ENCODE measurements at regions of chr12 and their contacts with region 1.

Region 1: GRCh38 chr12:56751712-56752598 is at the start of gene PRIM1:
- DNase-seq: peak; percentile 95
- ATAC-seq: peak; percentile 91
- H3K4me3 Mint-ChIP-seq: peak within 1 kb of the TSS; percentile 84
- H3K27ac Mint-ChIP-seq: peak within 1 kb of the TSS; percentile 99
- H3K4me1 Mint-ChIP-seq: peaks cover 32% of the 10 kb centered on the region
- H3K27me3 Mint-ChIP-seq: no peaks in the 10 kb centered on the region
- total RNA-seq, gene PRIM1: 81.3 to 83.7 TPM

Region 2: DNA sequence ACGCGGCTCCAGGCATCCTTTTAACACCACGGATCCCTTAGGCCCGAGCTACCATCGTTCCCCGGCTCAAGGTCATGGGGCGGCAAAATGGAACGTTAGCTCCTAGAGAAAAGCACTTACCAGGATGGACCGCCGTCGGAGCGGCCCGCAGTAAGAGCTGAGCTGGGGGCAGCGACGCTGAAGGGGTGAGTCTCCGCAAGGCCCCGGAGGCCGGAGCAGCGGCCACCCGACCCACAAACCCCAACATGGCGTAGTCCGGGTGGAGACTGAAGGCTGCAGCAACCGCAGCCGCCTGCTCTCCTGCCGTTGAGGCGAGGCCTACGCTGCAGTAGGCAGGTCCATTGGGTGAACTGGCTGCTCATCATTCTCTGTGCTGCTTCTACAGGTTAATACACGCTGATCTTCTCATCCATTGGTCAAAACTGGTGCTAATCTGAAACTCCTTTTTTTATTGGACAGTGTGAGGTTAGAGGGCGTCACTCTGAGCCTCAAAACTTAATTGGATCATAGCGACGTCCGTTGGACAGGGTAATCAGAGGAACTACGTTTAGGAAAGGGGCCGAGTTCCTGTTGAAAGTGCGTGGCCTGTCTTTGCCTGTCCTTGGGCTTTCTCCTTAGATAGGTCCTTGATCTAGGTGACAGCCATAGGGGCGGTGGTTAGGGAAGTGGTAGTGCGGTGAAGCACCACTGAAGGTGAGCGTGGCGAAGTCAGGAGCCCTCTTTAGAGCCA is 106.1 kb before region 1 on chr12 and contains the start of gene ATP5F1B:
- CTCF ChIA-PET with region 1: no interaction called
- POLR2A ChIA-PET with region 1: no interaction called
- intact Hi-C with region 1: loop called in 1 of 2 experiments (anchors 1 kb)
- DNase-seq: peak; percentile 95
- ATAC-seq: peak; percentile 99
- H3K4me3 Mint-ChIP-seq: peak within 1 kb of the TSS; percentile 95
- H3K27ac Mint-ChIP-seq: peak within 1 kb of the TSS; percentile 95
- H3K4me1 Mint-ChIP-seq: peaks cover 30% of the 10 kb centered on the region
- H3K27me3 Mint-ChIP-seq: no peaks in the 10 kb centered on the region
- total RNA-seq, gene ATP5F1B: 756 to 818 TPM

Region 3: GRCh38 chr12:56987551-56988053 is 235.6 kb after region 1 on chr12:
- CTCF ChIA-PET with region 1: interaction called, 82 read pairs
- POLR2A ChIA-PET with region 1: no interaction called
- intact Hi-C with region 1: loop called (anchors 1 kb)
- DNase-seq: peak; percentile 87
- ATAC-seq: peak; percentile 76
- H3K4me3 Mint-ChIP-seq: no peak overlapping the region
- H3K27ac Mint-ChIP-seq: no peak overlapping the region
- H3K4me1 Mint-ChIP-seq: peaks cover 11% of the 10 kb centered on the region
- H3K27me3 Mint-ChIP-seq: no peaks in the 10 kb centered on the region

Region 4: DNA sequence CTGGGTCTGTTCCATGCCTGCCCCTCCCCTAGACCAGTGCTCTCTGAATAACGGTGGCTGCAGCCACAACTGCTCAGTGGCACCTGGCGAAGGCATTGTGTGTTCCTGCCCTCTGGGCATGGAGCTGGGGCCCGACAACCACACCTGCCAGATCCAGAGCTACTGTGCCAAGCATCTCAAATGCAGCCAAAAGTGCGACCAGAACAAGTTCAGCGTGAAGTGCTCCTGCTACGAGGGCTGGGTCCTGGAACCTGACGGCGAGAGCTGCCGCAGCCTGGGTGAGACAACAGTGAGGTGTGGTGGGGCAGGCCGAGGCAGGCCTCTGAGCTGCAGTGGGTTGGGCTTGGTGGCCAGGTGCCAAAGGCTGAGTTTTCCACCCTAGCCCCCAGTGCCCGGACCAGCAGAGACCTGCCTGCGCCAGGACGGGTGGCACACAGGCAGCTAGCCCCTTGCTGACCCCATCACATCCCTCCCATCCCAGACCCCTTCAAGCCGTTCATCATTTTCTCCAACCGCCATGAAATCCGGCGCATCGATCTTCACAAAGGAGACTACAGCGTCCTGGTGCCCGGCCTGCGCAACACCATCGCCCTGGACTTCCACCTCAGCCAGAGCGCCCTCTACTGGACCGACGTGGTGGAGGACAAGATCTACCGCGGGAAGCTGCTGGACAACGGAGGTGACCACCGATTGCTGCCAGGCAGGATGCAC is 423.6 kb after region 1 on chr12:
- CTCF ChIA-PET with region 1: no interaction called
- POLR2A ChIA-PET with region 1: no interaction called
- intact Hi-C with region 1: loop called in 1 of 2 experiments (anchors 10 kb)
- DNase-seq: peak; percentile 81
- ATAC-seq: peak; percentile 59
- H3K4me3 Mint-ChIP-seq: no peak overlapping the region
- H3K27ac Mint-ChIP-seq: no peak overlapping the region
- H3K4me1 Mint-ChIP-seq: no peaks in the 10 kb centered on the region
- H3K27me3 Mint-ChIP-seq: no peaks in the 10 kb centered on the region

Region 5: GRCh38 chr12:57182921-57183790 is 431.2 kb after region 1 on chr12:
- CTCF ChIA-PET with region 1: interaction called, 3 read pairs
- POLR2A ChIA-PET with region 1: no interaction called
- intact Hi-C with region 1: loop called (anchors 1 to 10 kb)
- DNase-seq: peak; percentile 89
- ATAC-seq: peak; percentile 99
- H3K4me3 Mint-ChIP-seq: no peak overlapping the region
- H3K27ac Mint-ChIP-seq: no peak overlapping the region
- H3K4me1 Mint-ChIP-seq: peaks cover 2% of the 10 kb centered on the region
- H3K27me3 Mint-ChIP-seq: no peaks in the 10 kb centered on the region

Region 6: DNA sequence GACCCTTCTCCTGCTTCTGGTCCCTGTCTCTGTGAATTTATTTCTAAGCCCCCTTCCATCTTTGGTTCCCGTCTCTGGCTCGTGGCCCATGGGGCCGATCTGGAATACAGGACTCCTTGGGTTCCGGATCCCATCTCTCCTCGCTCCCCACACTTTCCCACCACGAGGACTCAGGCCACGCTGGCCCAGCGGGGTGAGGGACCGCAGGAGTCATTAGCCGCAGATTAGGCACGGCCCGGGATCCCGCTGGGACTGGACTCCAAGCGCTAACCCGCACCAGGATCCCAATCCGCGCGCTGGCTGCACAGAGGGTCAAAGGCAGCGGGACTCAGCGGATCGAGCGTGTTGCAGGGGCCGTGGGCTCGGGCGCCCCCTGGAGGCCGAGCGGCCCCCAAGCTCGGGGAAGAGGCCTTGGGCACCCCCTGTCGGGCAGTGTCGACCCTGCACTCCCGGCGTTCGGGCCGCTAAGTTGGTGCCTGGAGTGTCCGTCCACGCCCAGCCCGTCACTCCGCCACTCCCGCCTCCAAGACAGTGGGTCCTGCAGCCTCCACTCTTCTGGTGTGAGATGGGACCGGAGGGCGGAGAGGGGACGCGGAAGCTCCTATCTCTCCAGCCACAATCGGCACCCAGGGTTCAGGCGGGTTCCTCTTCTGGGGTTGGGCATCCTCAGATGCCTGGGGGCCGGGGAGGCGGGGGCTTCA is 487.0 kb after region 1 on chr12:
- CTCF ChIA-PET with region 1: no interaction called
- POLR2A ChIA-PET with region 1: no interaction called
- intact Hi-C with region 1: loop called in 1 of 2 experiments (anchors 5 kb)
- DNase-seq: peak; percentile 94
- ATAC-seq: peak; percentile 57
- H3K4me3 Mint-ChIP-seq: peak overlapping the region; percentile 83
- H3K27ac Mint-ChIP-seq: peak overlapping the region; percentile 80
- H3K4me1 Mint-ChIP-seq: peaks cover 70% of the 10 kb centered on the region
- H3K27me3 Mint-ChIP-seq: peaks cover 44% of the 10 kb centered on the region

Region 7: DNA sequence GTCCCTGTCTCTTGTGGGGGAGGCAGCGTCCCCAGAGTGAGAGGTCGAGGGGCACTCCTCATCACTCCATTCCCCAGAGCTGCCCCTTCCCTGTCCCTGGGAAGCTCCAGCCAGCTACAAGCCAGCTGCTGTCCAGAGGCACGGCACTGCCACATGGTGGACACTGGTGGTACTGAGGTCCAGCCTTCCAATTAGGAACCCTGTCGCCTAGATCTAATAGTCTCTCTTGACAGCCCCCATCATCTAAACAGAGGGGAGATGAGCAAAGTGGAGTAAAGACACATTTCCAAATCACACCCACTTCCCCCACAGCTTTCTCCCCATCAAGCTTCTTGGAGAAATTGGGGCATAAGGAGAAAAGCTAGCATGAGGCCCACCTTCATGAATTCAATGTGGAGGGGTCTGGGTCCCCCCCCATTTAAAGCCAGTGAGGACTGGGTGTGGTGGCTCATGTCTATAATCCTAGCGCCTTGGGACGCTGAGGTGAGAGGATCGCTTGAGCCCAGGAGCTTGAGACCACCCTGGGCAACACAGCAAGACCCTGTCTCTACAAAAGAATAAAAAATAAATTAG is 701.1 kb after region 1 on chr12:
- CTCF ChIA-PET with region 1: no interaction called
- POLR2A ChIA-PET with region 1: interaction called, 10 read pairs
- intact Hi-C with region 1: no loop called
- DNase-seq: peak; percentile 81
- ATAC-seq: peak; percentile 45
- H3K4me3 Mint-ChIP-seq: peak overlapping the region; percentile 31
- H3K27ac Mint-ChIP-seq: peak overlapping the region; percentile 47
- H3K4me1 Mint-ChIP-seq: peaks cover 31% of the 10 kb centered on the region
- H3K27me3 Mint-ChIP-seq: no peaks in the 10 kb centered on the region